ENCODE measurements at regions of chr2 and their contacts with region 1.

Region 1: DNA sequence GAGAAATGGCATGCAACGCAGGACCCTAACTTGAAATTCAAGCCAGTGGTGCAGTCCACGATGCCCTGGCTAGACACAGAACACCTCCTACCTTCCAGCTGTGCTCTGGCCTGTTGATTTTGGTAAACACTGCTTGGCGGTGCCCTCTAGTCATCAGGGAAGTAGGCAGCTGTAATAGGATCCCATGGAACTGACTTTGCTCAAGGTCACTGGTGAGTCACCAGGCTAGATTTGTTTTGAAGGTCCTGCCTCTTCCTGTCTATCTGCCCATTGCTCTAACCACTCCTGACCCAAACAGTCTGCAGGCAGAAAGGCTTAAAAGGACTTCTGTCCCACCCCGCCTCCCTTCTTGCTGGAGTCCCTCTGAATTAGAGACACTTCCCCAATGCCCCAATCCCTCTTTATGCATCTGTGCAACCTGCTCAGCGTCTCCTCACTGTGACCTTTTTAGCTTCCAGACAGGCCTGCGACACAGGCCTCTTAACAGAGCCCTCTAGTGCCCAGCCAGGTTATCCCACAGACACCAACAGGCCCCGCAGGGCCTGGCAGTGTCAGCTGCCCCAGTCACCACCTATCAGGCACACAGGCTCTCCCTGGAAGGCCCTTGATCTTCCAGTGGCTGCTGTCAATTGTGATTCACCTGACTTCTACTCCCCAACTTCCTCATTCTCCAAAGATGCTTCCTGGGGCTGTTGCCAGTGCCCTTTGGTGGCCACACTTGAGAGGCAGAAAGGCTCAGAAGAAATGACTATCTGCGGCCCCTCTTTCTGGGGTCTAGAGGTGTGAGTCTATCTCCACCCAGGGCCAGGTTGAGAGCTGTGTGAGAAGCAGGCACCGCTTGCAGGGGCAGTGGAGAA is 5.2 kb downstream of the TMEM127 start:
- DNase-seq: peak; percentile 85 to 86
- ATAC-seq: peak; percentile 89 to 91
- H3K4me3 ChIP-seq: no peak overlapping the region
- H3K27ac ChIP-seq: peak overlapping the region; percentile 65 to 75
- H3K4me1 ChIP-seq: peaks cover 36% of the 10 kb centered on the region
- CTCF ChIP-seq: peak; percentile 66
- EP300 ChIP-seq: no peak
- POLR2A ChIP-seq: no peak
- RAD21 ChIP-seq: peak; percentile 29 to 53; a peak in 4 of 5 replicates

Region 2: DNA sequence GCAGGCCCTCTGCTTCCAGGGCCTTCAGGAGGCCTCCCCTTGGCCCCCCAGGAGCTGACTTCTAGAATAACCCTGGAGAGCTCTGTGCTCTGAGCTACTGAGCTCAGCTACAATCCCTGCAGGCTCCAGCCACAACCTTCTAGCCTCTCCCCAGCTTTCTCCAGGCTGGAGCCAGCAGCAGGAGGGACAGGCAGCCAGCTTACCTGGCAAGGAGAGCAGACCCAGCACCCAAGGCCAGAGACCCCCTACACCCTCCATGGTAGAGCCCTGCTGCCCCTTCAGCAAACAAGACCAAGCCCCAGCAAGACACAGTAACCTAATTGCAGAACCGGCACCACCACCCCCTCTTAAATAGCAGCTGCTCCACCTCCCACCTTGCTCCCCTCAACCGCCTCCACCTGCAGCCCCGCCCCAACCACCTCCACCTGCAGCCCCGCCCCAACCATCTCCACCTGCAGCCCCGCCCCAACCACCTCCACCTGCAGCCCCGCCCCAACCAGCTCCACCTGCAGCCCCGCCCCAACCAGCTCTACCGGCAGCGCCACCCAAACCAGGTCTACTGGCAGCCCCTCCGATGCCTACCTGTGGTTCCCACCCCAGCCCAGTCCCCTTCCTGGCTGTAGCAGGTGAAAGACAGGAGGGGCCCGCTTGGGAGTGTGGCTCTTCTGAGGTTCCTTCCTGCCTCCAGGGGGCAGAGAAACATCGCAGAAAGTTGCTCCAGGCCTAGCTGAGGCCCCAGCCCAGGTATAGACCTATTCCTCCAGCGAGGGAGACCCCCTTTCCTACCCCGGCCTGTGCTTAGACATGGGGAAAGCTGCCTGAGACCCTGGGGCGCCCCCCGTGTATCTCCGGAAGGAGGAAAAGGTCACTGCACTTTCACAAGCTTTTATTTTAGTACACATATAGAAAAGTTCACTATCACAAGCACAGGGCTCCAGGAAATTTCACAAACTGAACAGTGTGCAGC is 122.2 kb before region 1 on chr2 and contains the start of gene ASTL:
- CTCF ChIA-PET with region 1: interaction called, 17 read pairs
- POLR2A ChIA-PET with region 1: no interaction called
- DNase-seq: peak; percentile 31 to 39
- ATAC-seq: peak; percentile 64 to 86; a peak in 4 of 6 replicates
- H3K4me3 ChIP-seq: no peak within 1 kb of the TSS
- H3K27ac ChIP-seq: no peak within 1 kb of the TSS
- H3K4me1 ChIP-seq: no peaks in the 10 kb centered on the region
- CTCF ChIP-seq: peak; percentile 48; the same call in 2 of the 3 replicates
- EP300 ChIP-seq: no peak
- POLR2A ChIP-seq: no peak
- RAD21 ChIP-seq: peak; percentile 65 to 76
- polyA plus RNA-seq, gene ASTL: not detected in 2 replicates

Region 3: DNA sequence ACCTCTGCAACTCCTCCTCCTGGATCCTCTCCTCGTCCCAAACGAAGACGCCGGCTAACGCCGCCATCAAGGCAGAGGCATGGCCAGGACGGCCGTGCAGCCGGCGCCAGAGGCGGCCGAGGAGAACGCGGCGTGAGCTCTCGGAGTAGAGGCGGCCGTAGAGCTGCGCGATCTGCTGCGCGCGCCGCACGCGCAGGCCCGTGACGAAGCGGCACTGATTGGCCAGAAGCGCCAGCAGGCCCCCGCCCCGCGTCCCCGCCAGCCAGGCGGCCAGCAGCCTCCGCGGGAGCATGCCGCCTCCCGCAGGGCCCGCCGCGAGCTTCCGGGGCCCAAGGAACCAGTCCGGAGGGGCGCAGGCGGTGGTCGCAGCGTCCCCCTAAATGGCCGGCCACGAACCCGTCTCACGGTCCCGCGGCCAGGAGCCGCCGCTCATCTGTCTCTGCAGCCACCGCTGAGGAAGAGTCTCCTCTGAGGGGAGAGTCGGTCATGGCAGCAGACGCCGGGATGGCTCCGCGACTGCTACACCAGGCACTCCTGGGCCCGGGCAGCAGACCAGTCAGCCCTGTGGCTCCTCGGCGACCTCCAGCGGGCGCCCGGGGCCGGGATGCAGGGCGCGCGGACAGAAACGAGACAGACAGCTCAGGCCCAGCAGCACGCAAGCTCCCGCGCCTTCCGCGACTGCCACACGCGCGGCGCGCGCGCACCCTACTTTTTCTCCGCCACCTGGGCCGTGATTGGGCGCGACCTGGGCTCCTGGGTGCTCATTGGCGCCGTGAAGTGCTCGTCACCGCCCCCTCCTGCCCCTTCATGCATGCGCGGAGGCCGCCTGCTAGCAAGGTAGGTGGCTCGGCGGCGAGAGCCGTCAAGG is 52.3 kb before region 1 on chr2 and contains the start of gene STARD7:
- CTCF ChIA-PET with region 1: interaction called, 11 read pairs
- POLR2A ChIA-PET with region 1: interaction called, 17 read pairs
- DNase-seq: peak; percentile 95 to 99
- ATAC-seq: peak; percentile 97
- H3K4me3 ChIP-seq: peak within 1 kb of the TSS; percentile 80
- H3K27ac ChIP-seq: peak within 1 kb of the TSS; percentile 96 to 97
- H3K4me1 ChIP-seq: peaks cover 45% of the 10 kb centered on the region
- CTCF ChIP-seq: no peak
- EP300 ChIP-seq: no peak
- POLR2A ChIP-seq: peak; percentile 92
- RAD21 ChIP-seq: no peak; a peak in 1 of 5 replicates
- polyA plus RNA-seq, gene STARD7: 119 and 136 TPM in 2 replicates

Region 4: GRCh38 chr2:96241005-96241626 is 19.5 kb before region 1 on chr2:
- CTCF ChIA-PET with region 1: interaction called, 13 read pairs
- POLR2A ChIA-PET with region 1: interaction called, 3 read pairs
- DNase-seq: no peak
- ATAC-seq: peak in 1 of 2 experiments; percentile 25; a peak in 2 of 6 replicates
- H3K4me3 ChIP-seq: no peak overlapping the region
- H3K27ac ChIP-seq: no peak overlapping the region
- H3K4me1 ChIP-seq: no peaks in the 10 kb centered on the region
- CTCF ChIP-seq: no peak
- EP300 ChIP-seq: no peak
- POLR2A ChIP-seq: no peak
- RAD21 ChIP-seq: no peak